AG04449 (cell line): ENCODE measurements at regions of chr11 and their contacts with region 1.

Region 1: DNA sequence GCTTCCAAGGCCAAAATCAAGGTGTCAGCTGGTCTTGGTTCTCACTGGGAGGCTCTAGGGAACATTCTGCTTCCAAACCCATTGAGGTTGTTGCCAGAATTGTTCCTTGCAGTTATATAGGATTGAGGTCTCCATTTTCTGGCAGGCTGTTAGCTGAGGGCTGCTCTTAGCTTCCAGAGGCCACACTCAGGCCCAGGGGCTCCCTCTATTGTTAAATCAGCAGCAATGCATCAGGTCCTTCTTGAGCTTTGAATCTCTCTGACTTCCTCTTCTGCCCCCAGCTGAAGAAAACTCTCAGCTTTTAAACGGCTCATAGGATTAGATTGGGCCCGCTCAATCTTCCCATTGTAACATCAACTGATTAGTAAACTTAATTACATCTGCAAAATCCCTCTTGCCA is 39.3 kb upstream of the BSX start:
- DNase-seq: no peak
- H3K4me3 ChIP-seq: no peak overlapping the region
- CTCF ChIP-seq: peak; percentile 76

Region 2: GRCh38 chr11:122781378-122782195 is 239.4 kb before region 1 on chr11:
- CTCF ChIA-PET with region 1: interaction called, 10 read pairs
- POLR2A ChIA-PET with region 1: no interaction called
- DNase-seq: peak; percentile 71
- H3K4me3 ChIP-seq: no peak overlapping the region
- CTCF ChIP-seq: peak; percentile 92

Region 3: GRCh38 chr11:122874991-122875390 is 146.0 kb before region 1 on chr11:
- CTCF ChIA-PET with region 1: interaction called, 758 read pairs
- POLR2A ChIA-PET with region 1: no interaction called
- DNase-seq: no peak
- H3K4me3 ChIP-seq: no peak overlapping the region
- CTCF ChIP-seq: no peak

Region 4: GRCh38 chr11:122904090-122904489 is 116.9 kb before region 1 on chr11:
- CTCF ChIA-PET with region 1: interaction called, 13 read pairs
- POLR2A ChIA-PET with region 1: no interaction called
- DNase-seq: no peak
- H3K4me3 ChIP-seq: no peak overlapping the region
- CTCF ChIP-seq: no peak

Region 5: GRCh38 chr11:122998727-122999366 is 22.1 kb before region 1 on chr11:
- CTCF ChIA-PET with region 1: interaction called, 47 read pairs
- POLR2A ChIA-PET with region 1: no interaction called
- DNase-seq: no peak
- H3K4me3 ChIP-seq: no peak overlapping the region
- CTCF ChIP-seq: no peak

Region 6: DNA sequence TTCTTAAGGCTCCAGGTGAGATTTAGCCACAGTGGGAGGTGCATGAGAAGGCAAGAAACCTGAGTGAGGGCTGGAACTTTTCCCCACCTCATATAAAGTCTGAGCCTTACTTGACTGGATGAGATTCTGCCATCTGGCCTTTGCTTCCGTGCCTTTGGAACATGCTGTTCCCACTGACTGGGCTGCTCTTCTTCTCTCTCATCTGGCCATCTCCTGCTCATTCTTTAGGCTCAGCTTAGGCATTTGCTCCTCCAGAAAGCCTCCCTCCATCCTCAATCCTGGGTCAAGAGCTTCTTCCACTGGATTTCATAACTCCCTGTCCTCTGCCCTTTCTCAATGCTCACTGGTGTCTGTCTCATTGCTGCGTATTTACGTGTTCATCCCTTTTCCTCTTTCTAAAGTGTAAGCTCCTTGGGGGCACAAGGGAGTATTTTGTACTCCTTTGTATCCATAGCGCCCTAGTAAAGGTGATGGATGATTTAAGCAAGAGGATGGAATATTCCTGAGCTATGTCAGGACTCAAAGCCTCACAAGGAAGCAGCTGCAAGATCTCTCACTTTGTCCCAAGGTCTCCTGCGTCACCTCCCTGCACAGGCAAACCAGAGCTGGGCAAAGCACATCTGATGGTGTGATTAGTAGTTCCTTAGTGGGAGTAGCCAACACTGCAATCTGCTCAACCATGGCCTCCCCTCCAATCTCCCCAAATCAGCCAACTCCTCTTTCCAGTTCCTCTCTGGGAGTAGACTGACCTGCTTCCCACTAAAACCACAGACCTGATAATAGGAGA is 25.7 kb after region 1 on chr11:
- CTCF ChIA-PET with region 1: interaction called, 14 read pairs
- POLR2A ChIA-PET with region 1: no interaction called
- DNase-seq: no peak
- H3K4me3 ChIP-seq: no peak overlapping the region
- CTCF ChIP-seq: no peak